CD8-positive, alpha-beta T cell (primary cell): ENCODE measurements at regions of chr13 and their contacts with region 1.

Region 1: GRCh38 chr13:80033286-80033685 is 307.6 kb downstream of the SPRY2 start:
- DNase-seq: no peak
- ATAC-seq: no peak
- H3K4me3 ChIP-seq: no peak overlapping the region
- H3K4me3 Mint-ChIP-seq: no peak overlapping the region
- H3K27ac ChIP-seq: no peak overlapping the region
- H3K27ac Mint-ChIP-seq: no peak overlapping the region
- H3K4me1 ChIP-seq: no peaks in the 10 kb centered on the region
- H3K4me1 Mint-ChIP-seq: no peaks in the 10 kb centered on the region
- H3K27me3 ChIP-seq: no peaks in the 10 kb centered on the region
- H3K27me3 Mint-ChIP-seq: no peaks in the 10 kb centered on the region
- CTCF ChIP-seq: no peak

Region 2: GRCh38 chr13:79973533-79973963 is 59.7 kb before region 1 on chr13:
- CTCF ChIA-PET with region 1: no interaction called
- POLR2A ChIA-PET with region 1: no interaction called
- intact Hi-C with region 1: loop called in 1 of 2 experiments (anchors 2 kb)
- DNase-seq: peak in 1 of 9 experiments; percentile 2
- ATAC-seq: no peak
- H3K4me3 ChIP-seq: no peak overlapping the region
- H3K4me3 Mint-ChIP-seq: no peak overlapping the region
- H3K27ac ChIP-seq: no peak overlapping the region
- H3K27ac Mint-ChIP-seq: no peak overlapping the region
- H3K4me1 ChIP-seq: no peaks in the 10 kb centered on the region
- H3K4me1 Mint-ChIP-seq: no peaks in the 10 kb centered on the region
- H3K27me3 ChIP-seq: no peaks in the 10 kb centered on the region
- H3K27me3 Mint-ChIP-seq: no peaks in the 10 kb centered on the region
- CTCF ChIP-seq: no peak